Heart left ventricle (tissue), 16 donors: ENCODE measurements at regions of chr7 and their contacts with region 1.

Region 1: DNA sequence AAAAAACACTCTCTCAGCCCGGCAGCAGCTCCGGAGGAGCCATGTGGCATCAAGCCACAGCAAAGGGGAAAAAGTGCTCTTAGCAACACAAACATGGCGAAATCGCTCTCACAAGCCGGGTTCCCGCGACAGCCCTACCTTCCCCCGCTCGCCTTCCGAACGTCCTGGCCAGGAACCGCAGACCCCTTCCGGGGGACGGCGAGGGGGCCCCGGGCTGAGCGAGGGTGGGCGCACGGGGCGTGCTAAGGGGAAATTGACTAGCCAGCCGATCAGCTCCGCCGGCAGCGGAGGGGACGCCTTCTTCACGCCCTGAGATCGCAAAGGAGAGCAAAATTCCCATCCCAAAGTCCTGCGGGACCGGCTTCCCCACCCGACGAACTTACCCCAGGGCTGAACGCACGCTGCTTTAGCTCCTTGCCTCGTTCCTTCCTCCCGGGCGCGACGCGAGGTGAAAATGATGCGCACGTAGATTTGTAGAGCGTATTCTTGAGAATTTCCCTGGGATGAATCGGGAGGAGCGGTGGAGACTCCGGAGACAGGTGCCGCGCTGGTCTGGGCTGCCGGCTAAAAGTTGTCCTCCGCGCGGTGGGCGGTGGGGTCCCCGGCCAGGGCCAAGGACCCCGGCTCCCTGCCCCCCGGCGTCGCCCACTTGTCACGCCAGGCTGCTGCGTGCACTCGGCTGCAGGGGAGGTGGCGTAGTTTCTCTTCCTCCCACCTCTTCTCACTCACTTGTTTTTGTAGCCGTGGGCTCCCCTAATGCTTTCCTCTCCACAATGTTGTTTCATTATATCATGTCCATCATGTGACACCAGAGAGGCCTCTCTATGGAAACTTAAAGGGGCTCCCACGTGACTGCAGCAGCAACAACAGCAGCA is 220.1 kb upstream of the MKLN1 start:
- DNase-seq: peak; percentile 76 to 85 (median 80)
- ATAC-seq: peak; percentile 36 to 56 (median 48)
- H3K4me3 ChIP-seq: peak overlapping the region; percentile 62 to 98 (median 86)
- H3K27ac ChIP-seq: peak overlapping the region; percentile 94 to 100 (median 99)
- H3K4me1 ChIP-seq: peaks cover 5 to 67% (median 50%) of the 10 kb centered on the region in 12 donors
- H3K27me3 ChIP-seq: no peaks in the 10 kb centered on the region
- CTCF ChIP-seq: peak in 2 of 12 donors; percentile 14 to 26
- POLR2A ChIP-seq: peak in 1 of 2 donors; percentile 87

Region 2: GRCh38 chr7:131052285-131052904 is 55.2 kb before region 1 on chr7:
- intact Hi-C with region 1: no loop called
- DNase-seq: no peak
- ATAC-seq: no peak
- H3K4me3 ChIP-seq: no peak overlapping the region
- H3K27ac ChIP-seq: peak overlapping the region in 1 of 12 donors; percentile 28
- H3K4me1 ChIP-seq: peaks cover 0 to 90% (median 72%) of the 10 kb centered on the region in 12 donors
- H3K27me3 ChIP-seq: no peaks in the 10 kb centered on the region
- CTCF ChIP-seq: no peak
- POLR2A ChIP-seq: no peak

Region 3: GRCh38 chr7:131071786-131072504 is 35.6 kb before region 1 on chr7:
- intact Hi-C with region 1: loop called in 8 of 10 experiments (anchors 2 to 5 kb)
- DNase-seq: peak in 4 of 5 donors; percentile 43 to 83 (median 63)
- ATAC-seq: peak; percentile 39 to 70 (median 62)
- H3K4me3 ChIP-seq: peak overlapping the region in 9 of 12 donors; percentile 14 to 39 (median 21)
- H3K27ac ChIP-seq: peak overlapping the region; percentile 34 to 88 (median 62)
- H3K4me1 ChIP-seq: peaks cover 0 to 87% (median 73%) of the 10 kb centered on the region in 12 donors
- H3K27me3 ChIP-seq: no peaks in the 10 kb centered on the region
- CTCF ChIP-seq: peak; percentile 9 to 65 (median 44)
- POLR2A ChIP-seq: peak in 1 of 2 donors; percentile 20

Region 4: DNA sequence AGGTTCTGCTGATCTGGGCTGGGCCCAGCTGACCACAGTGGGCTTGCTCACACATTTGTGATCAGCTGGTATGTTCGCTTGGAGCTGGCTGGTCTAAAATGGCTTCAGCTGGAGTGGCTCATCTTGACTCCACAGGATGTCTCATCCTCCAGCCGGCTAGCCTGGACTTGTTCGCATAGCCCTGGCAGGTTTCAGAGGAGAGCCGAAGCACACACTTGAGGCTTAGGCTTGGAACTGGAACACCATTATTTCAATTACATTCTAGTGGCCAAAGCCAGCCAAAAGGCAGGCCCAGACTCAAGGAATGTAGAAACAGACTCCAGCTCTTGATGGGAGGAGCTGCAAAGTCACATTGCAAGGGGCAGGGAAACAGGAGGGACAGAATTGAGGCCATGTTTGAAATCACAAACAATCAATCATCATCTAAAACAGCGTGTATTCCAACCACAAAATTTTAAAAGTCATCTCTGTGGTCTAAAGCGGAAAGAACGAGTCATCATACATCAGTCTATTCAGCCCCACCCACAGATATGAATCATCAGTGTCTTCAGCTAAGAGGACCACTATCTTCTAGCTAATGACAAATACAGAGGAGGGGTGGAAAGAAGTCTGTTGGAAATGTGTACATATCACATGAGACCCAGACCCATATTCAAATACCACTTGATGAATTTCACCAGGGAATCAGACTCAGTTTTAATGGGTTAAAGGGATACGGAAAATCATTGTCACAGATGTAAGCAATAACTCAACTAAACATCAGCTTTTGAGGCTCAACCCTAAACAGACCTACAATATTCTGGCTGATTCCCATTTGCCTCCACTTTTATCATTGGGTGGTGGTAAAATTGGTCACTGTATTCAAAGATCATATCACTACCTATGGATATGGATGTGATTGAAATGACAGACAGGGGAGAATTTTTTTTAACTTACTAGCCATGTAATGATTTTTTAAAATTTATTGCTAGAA is 81.1 kb after region 1 on chr7:
- intact Hi-C with region 1: loop called in 2 of 10 experiments (anchors 5 to 10 kb)
- DNase-seq: no peak
- ATAC-seq: peak in 2 of 4 donors; percentile 31 to 52
- H3K4me3 ChIP-seq: no peak overlapping the region
- H3K27ac ChIP-seq: peak overlapping the region in 1 of 12 donors; percentile 38
- H3K4me1 ChIP-seq: peaks cover 0 to 31% (median 0%) of the 10 kb centered on the region in 12 donors
- H3K27me3 ChIP-seq: no peaks in the 10 kb centered on the region
- CTCF ChIP-seq: no peak
- POLR2A ChIP-seq: no peak

Region 5: GRCh38 chr7:131225619-131226513 is 118.3 kb after region 1 on chr7:
- intact Hi-C with region 1: loop called in 2 of 10 experiments (anchors 10 kb)
- DNase-seq: peak in 4 of 5 donors; percentile 6 to 54 (median 43)
- ATAC-seq: peak in 3 of 4 donors; percentile 74 to 87 (median 86)
- H3K4me3 ChIP-seq: no peak overlapping the region
- H3K27ac ChIP-seq: peak overlapping the region in 9 of 12 donors; percentile 17 to 79 (median 54)
- H3K4me1 ChIP-seq: peaks cover 0 to 23% (median 8%) of the 10 kb centered on the region in 12 donors
- H3K27me3 ChIP-seq: no peaks in the 10 kb centered on the region
- CTCF ChIP-seq: no peak
- POLR2A ChIP-seq: no peak

Region 6: GRCh38 chr7:131284702-131285419 is 177.3 kb after region 1 on chr7:
- intact Hi-C with region 1: loop called in 2 of 10 experiments (anchors 5 kb)
- DNase-seq: peak in 2 of 5 donors; percentile 41 to 45
- ATAC-seq: peak; percentile 54 to 78 (median 68)
- H3K4me3 ChIP-seq: no peak overlapping the region
- H3K27ac ChIP-seq: peak overlapping the region; percentile 11 to 84 (median 61)
- H3K4me1 ChIP-seq: peaks cover 0 to 37% (median 17%) of the 10 kb centered on the region in 12 donors
- H3K27me3 ChIP-seq: no peaks in the 10 kb centered on the region
- CTCF ChIP-seq: no peak
- POLR2A ChIP-seq: no peak

Region 7: DNA sequence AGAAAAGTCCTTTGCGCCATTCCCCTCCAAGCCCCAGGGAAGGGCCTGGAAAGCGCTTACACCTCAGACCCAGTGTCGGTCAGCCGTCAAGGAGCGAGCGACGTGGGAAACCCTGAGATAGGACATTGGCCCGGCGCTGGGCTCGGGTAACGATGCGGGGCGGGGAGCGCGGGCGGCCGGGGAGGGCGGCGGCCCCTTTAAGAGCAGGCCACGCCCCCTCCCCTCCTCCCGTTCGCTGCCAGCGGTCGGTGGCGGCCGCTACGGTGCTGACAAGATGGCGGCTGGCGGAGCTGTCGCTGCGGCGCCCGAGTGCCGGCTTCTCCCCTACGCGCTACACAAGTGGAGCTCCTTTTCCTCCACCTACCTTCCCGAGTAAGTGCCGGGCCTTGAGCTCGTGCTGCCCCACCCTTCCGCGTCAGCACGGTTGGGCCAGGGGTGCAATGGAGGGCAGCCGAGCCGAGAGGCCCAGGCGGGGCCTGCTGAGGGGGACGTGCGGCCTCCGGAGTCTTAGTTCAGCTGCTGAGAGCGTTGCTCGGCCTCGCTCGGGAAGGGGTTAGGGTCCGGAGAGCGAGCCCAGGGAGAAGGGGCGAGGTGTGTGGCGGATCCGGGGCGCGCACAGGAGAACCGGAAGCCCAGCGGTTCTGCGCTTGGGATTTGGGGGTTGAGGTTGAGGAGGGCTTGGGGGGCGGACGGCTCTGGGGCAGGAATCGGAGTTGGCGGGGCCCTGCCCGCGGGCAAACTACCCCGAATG is 220.2 kb after region 1 on chr7 and contains the start of gene MKLN1:
- intact Hi-C with region 1: loop called in 3 of 10 experiments (anchors 2 to 10 kb)
- DNase-seq: peak; percentile 92 to 96 (median 94)
- ATAC-seq: peak; percentile 96 to 99 (median 99)
- H3K4me3 ChIP-seq: peak within 1 kb of the TSS; percentile 77 to 98 (median 90)
- H3K27ac ChIP-seq: peak within 1 kb of the TSS; percentile 93 to 99 (median 98)
- H3K4me1 ChIP-seq: peaks cover 0 to 44% (median 28%) of the 10 kb centered on the region in 12 donors
- H3K27me3 ChIP-seq: no peaks in the 10 kb centered on the region
- CTCF ChIP-seq: peak in 1 of 12 donors; percentile 7
- POLR2A ChIP-seq: peak; percentile 31 to 70
- total RNA-seq, gene MKLN1: 26.7 to 49.7 (median 42.7) TPM